Activated CD4-positive, alpha-beta memory T cell treated with anti-CD3 and anti-CD28 coated beads for 36 hours (primary cell): ENCODE measurements at regions of chr2 and their contacts with region 1.

Region 1: GRCh38 chr2:97663965-97664635 is at the start of gene ACTR1B:
- DNase-seq: peak; percentile 99
- H3K4me3 Mint-ChIP-seq: peak within 1 kb of the TSS; percentile 91
- H3K27ac Mint-ChIP-seq: peak within 1 kb of the TSS; percentile 95
- H3K4me1 Mint-ChIP-seq: peaks cover 27% of the 10 kb centered on the region
- H3K27me3 Mint-ChIP-seq: no peaks in the 10 kb centered on the region
- total RNA-seq, gene ACTR1B: 113 to 114 TPM

Region 2: GRCh38 chr2:97645695-97646629 is 18.1 kb before region 1 on chr2 and contains the start of gene COX5B:
- CTCF ChIA-PET with region 1: interaction called, 35 read pairs
- POLR2A ChIA-PET with region 1: interaction called, 191 read pairs
- intact Hi-C with region 1: loop called (anchors 1 kb)
- DNase-seq: peak; percentile 100
- H3K4me3 Mint-ChIP-seq: peak within 1 kb of the TSS; percentile 81
- H3K27ac Mint-ChIP-seq: peak within 1 kb of the TSS; percentile 88
- H3K4me1 Mint-ChIP-seq: peaks cover 21% of the 10 kb centered on the region
- H3K27me3 Mint-ChIP-seq: no peaks in the 10 kb centered on the region
- total RNA-seq, gene COX5B: 215 to 217 TPM

Region 3: GRCh38 chr2:97697252-97698235 is 33.4 kb after region 1 on chr2:
- CTCF ChIA-PET with region 1: interaction called, 114 read pairs
- POLR2A ChIA-PET with region 1: interaction called, 4 read pairs
- intact Hi-C with region 1: loop called (anchors 1 kb)
- DNase-seq: peak; percentile 95
- H3K4me3 Mint-ChIP-seq: peak overlapping the region; percentile 17
- H3K27ac Mint-ChIP-seq: no peak overlapping the region
- H3K4me1 Mint-ChIP-seq: peaks cover 6% of the 10 kb centered on the region
- H3K27me3 Mint-ChIP-seq: peaks cover 1% of the 10 kb centered on the region

Region 4: DNA sequence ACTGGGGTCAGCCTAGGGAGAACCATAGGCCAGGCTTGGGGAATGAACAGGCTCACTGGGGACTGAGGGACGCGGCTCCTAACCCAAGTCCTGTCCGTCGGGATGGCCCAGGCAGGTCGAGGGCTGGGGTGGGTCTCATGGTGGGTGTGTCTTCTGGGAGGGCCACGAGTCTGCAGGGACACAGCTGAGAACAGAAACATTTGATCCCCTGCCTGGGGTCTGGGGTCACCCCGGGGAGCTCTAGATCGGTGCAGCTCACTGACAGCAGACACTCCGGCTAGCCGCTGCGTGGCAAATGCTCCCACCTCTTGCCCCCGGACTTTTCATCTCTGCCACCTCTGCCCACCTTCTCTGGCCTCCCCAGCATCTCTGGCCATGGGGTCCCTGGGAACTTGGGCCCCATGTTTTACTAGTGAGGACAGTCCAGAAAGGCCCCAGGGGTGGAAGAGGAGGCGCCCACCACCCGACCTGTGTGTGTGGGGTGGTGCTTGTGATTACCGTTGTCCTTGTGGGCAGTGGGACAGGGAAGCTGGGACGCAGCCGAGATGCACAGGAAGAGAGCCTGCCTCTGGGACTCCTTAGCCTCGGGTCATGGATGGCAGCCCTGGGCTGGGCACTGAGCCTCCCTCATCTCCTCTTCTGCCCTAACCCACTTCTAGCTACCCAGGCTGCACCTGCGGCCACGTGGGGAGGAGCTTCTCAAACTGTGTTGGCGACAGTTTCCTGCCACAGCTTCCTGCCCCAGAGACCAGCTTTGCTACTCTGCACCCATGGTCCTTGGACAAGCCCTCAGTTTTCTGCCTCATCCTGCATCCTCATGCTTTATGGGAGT is 54.2 kb after region 1 on chr2:
- CTCF ChIA-PET with region 1: interaction called, 9 read pairs
- POLR2A ChIA-PET with region 1: interaction called, 34 read pairs
- intact Hi-C with region 1: loop called (anchors 1 kb)
- DNase-seq: peak; percentile 87
- H3K4me3 Mint-ChIP-seq: peak overlapping the region; percentile 76
- H3K27ac Mint-ChIP-seq: peak overlapping the region; percentile 95
- H3K4me1 Mint-ChIP-seq: peaks cover 71% of the 10 kb centered on the region
- H3K27me3 Mint-ChIP-seq: no peaks in the 10 kb centered on the region

Region 5: GRCh38 chr2:97995734-97996624 is 331.9 kb after region 1 on chr2 and contains the start of gene TMEM131:
- CTCF ChIA-PET with region 1: no interaction called
- POLR2A ChIA-PET with region 1: no interaction called
- intact Hi-C with region 1: loop called (anchors 1 kb)
- DNase-seq: peak; percentile 97
- H3K4me3 Mint-ChIP-seq: peak within 1 kb of the TSS; percentile 87
- H3K27ac Mint-ChIP-seq: peak within 1 kb of the TSS; percentile 95
- H3K4me1 Mint-ChIP-seq: peaks cover 32% of the 10 kb centered on the region
- H3K27me3 Mint-ChIP-seq: no peaks in the 10 kb centered on the region
- total RNA-seq, gene TMEM131: 23.1 to 23.7 TPM

Region 6: DNA sequence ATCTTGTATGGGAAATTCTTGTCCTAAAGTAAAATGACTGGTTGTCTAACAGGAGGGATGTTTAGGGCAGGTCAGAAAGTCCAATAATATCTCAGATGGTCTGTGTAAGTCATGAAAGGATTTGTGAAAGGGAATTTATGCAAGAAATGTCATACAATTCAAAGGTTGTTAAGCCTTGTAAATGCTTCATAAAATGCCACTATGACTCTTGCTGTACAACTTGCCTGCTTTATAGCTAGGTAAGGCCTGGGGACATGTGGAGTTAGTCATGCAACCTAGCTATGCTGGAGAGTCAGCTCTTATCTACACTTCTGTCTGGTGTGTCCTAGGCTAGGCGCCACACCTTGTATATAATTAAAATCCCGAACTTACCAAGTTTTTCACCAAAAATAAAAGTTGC is 386.0 kb after region 1 on chr2:
- CTCF ChIA-PET with region 1: no interaction called
- POLR2A ChIA-PET with region 1: no interaction called
- intact Hi-C with region 1: no loop called
- DNase-seq: no peak
- H3K4me3 Mint-ChIP-seq: no peak overlapping the region
- H3K27ac Mint-ChIP-seq: no peak overlapping the region
- H3K4me1 Mint-ChIP-seq: no peaks in the 10 kb centered on the region
- H3K27me3 Mint-ChIP-seq: peaks cover 7% of the 10 kb centered on the region